PC-9 (cell line): ENCODE measurements at regions of chr1 and their contacts with region 1.

Region 1: GRCh38 chr1:179867807-179868330 is 9.7 kb downstream of the TOR1AIP2 start:
- DNase-seq: peak in 1 of 2 experiments; percentile 24
- H3K4me3 ChIP-seq: no peak overlapping the region
- H3K27ac ChIP-seq: no peak overlapping the region
- H3K4me1 ChIP-seq: no peaks in the 10 kb centered on the region
- H3K27me3 ChIP-seq: no peaks in the 10 kb centered on the region
- CTCF ChIP-seq: peak; percentile 78

Region 2: GRCh38 chr1:179217943-179218507 is 649.8 kb before region 1 on chr1:
- CTCF ChIA-PET with region 1: no interaction called
- POLR2A ChIA-PET with region 1: no interaction called
- intact Hi-C with region 1: no loop called
- DNase-seq: no peak
- H3K4me3 ChIP-seq: no peak overlapping the region
- H3K27ac ChIP-seq: peak overlapping the region; percentile 40
- H3K4me1 ChIP-seq: peaks cover 11% of the 10 kb centered on the region
- H3K27me3 ChIP-seq: no peaks in the 10 kb centered on the region
- CTCF ChIP-seq: no peak

Region 3: GRCh38 chr1:179937668-179938259 is 69.9 kb after region 1 on chr1:
- CTCF ChIA-PET with region 1: no interaction called
- POLR2A ChIA-PET with region 1: interaction called, 10 read pairs
- intact Hi-C with region 1: no loop called
- DNase-seq: no peak
- H3K4me3 ChIP-seq: no peak overlapping the region
- H3K27ac ChIP-seq: no peak overlapping the region
- H3K4me1 ChIP-seq: peaks cover 7% of the 10 kb centered on the region; the same call in 1 of the 2 replicates
- H3K27me3 ChIP-seq: no peaks in the 10 kb centered on the region
- CTCF ChIP-seq: no peak

Region 4: DNA sequence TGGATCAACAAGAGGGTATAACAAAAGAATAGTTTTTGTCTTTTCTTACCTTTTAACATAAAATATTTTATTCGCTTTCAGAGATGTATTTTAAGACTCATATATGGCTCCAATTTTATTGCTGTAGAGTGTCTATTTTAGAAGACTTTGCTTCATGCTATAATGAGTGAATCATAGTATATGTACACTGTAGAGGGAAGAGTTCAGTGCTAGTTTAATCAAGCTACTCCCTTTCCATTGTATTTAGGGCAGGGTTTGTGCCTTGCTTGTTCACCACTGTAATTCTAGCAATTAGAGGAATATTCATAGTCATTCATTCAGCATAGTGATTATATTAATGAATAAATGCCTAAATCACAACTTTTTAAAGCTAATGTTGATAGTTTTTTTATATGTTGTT is 165.5 kb after region 1 on chr1:
- CTCF ChIA-PET with region 1: no interaction called
- POLR2A ChIA-PET with region 1: no interaction called
- intact Hi-C with region 1: loop called (anchors 10 kb)
- DNase-seq: no peak
- H3K4me3 ChIP-seq: no peak overlapping the region
- H3K27ac ChIP-seq: no peak overlapping the region
- H3K4me1 ChIP-seq: no peaks in the 10 kb centered on the region
- H3K27me3 ChIP-seq: no peaks in the 10 kb centered on the region
- CTCF ChIP-seq: no peak

Region 5: GRCh38 chr1:180178511-180179161 is 310.8 kb after region 1 on chr1:
- CTCF ChIA-PET with region 1: interaction called, 3 read pairs
- POLR2A ChIA-PET with region 1: no interaction called
- intact Hi-C with region 1: loop called (anchors 1 kb)
- DNase-seq: peak in 1 of 2 experiments; percentile 61
- H3K4me3 ChIP-seq: no peak overlapping the region
- H3K27ac ChIP-seq: no peak overlapping the region
- H3K4me1 ChIP-seq: no peaks in the 10 kb centered on the region
- H3K27me3 ChIP-seq: no peaks in the 10 kb centered on the region
- CTCF ChIP-seq: peak; percentile 99